K562 (cell line): ENCODE measurements at regions of chr3 and their contacts with region 1.

Region 1: DNA sequence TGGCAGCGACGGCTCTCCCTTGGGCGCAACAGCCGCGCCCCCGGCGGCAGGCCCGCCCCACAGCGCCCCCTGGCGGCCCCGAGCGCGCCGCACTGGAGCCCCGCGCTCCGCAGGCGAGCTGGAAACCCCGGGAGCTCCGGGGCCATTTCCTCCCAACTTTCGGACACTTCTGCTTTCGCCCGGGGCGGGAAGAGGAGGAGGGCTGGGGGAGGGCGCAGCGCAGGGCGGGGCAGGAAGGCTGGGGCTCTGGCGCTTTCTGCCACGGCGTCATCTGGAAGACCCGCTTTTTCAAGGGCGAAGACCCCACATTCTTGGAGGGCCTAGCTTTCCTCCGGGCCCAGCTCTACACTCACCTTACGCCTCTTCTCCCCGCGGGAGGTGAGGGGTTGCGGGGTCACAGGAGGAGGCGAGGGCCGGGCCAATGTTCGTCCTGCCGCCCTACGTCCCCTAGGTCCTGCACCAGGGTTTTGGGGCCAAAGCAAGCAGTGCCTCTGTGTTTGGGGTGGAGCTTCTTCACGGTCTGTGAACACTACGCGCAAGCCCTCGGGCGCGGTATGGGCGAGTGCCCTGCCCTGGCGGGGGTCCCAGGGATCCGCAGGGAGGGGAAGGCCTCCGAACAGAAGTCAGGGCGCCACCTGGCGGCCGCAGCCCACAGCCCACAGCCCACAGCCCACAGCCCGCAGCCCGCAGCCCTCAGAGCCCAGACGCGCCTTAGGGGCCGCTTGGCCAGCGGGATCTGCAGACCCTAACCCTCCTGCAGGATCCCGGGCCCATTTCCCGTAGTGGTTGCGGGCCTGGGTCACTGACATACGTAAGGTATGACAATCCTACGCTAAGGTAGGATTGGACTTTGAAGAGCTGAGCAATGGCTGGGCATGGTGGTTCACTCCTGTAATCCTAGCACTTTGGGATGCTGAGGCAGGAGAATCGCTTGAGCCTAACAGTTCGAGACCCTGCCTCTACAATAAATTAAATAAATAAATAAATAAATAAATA is 31.1 kb downstream of the FOXL2 start:
- DNase-seq: peak; percentile 90 to 93 (median 92)
- ATAC-seq: peak; percentile 92
- H3K4me3 ChIP-seq: peak overlapping the region; percentile 79
- H3K27ac ChIP-seq: peak overlapping the region; percentile 98
- H3K4me1 ChIP-seq: peaks cover 29 to 36% of the 10 kb centered on the region in 2 experiments
- H3K27me3 ChIP-seq: no peaks in the 10 kb centered on the region
- CTCF ChIP-seq: peak; percentile 72 to 94 (median 78)
- EP300 ChIP-seq: no peak
- POLR2A ChIP-seq: peak; percentile 72
- RAD21 ChIP-seq: peak; percentile 91 to 94

Region 2: GRCh38 chr3:138186803-138187295 is 729.0 kb before region 1 on chr3:
- CTCF ChIA-PET with region 1: no interaction called
- POLR2A ChIA-PET with region 1: no interaction called
- in situ Hi-C with region 1: no loop called
- intact Hi-C with region 1: loop called (anchors 10 kb)
- DNase-seq: peak; percentile 88 to 96 (median 90)
- ATAC-seq: peak; percentile 88
- H3K4me3 ChIP-seq: peak overlapping the region; percentile 77
- H3K27ac ChIP-seq: peak overlapping the region; percentile 97
- H3K4me1 ChIP-seq: peaks cover 0 to 14% of the 10 kb centered on the region in 2 experiments; a peak in 2 of 5 replicates
- H3K27me3 ChIP-seq: no peaks in the 10 kb centered on the region
- CTCF ChIP-seq: no peak
- EP300 ChIP-seq: no peak
- POLR2A ChIP-seq: no peak
- RAD21 ChIP-seq: no peak

Region 3: GRCh38 chr3:138694287-138695007 is 221.4 kb before region 1 on chr3:
- CTCF ChIA-PET with region 1: interaction called, 19 read pairs
- POLR2A ChIA-PET with region 1: interaction called, 4 read pairs
- in situ Hi-C with region 1: loop called (anchors 5 kb)
- intact Hi-C with region 1: loop called (anchors 1 kb)
- DNase-seq: peak in 3 of 4 experiments; percentile 21 to 76 (median 53)
- ATAC-seq: peak; percentile 79
- H3K4me3 ChIP-seq: no peak overlapping the region
- H3K27ac ChIP-seq: peak overlapping the region; percentile 62; the same call in 2 of the 3 replicates
- H3K4me1 ChIP-seq: peaks cover 0 to 16% of the 10 kb centered on the region in 2 experiments; a peak in 4 of 5 replicates
- H3K27me3 ChIP-seq: no peaks in the 10 kb centered on the region
- CTCF ChIP-seq: no peak
- EP300 ChIP-seq: peak; percentile 31; the same call in 1 of the 2 replicates
- POLR2A ChIP-seq: no peak
- RAD21 ChIP-seq: no peak

Region 4: DNA sequence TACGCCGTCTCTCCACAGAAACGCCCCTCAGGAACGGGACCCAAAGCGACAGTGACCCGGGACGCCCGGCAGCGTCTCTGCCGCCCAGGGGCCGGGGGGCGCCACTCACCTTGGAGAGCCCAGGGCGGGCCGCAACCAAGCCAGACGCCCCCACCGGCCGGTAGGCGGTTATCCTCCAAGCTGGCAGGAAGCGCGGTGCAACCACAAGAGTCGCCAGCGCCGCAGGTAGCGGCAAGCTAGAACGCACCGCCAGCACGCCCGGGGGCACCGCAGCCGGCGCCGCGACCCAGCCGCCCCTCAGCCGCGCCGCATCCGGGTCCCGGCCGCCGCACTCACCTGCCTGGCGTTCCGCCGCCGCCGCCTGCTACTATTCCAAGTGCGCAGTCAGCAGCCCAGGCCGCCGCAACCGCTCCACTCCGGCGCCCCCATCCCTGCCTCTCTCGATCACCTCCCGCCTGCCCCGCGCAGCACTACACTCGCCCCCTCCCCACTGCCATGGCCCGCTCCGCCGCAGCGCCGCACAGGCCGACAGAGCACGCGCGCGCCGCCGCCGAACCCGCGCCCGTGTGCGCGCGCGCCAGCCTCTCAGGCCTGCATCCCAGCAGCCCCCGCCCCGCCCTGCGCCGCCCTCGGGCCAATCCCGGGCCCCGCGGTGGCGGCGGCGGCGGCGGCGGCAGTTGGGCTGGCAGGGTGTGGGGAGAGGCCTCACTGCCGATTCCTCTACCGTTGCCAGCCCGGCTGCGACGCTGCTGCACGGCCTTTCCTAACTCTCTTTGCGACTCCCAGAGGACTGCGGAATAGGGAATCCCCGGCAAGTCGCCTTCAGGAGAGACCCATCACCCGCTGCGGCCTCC is 81.2 kb before region 1 on chr3 and contains the start of gene PIK3CB:
- CTCF ChIA-PET with region 1: interaction called, 21 read pairs
- POLR2A ChIA-PET with region 1: interaction called, 6 read pairs
- in situ Hi-C with region 1: loop called (anchors 5 kb)
- intact Hi-C with region 1: loop called (anchors 1 kb)
- DNase-seq: peak; percentile 91 to 94 (median 92)
- ATAC-seq: peak; percentile 88
- H3K4me3 ChIP-seq: peak within 1 kb of the TSS; percentile 99
- H3K27ac ChIP-seq: peak within 1 kb of the TSS; percentile 91
- H3K4me1 ChIP-seq: peaks cover 8 to 9% of the 10 kb centered on the region in 2 experiments; a peak in 4 of 5 replicates
- H3K27me3 ChIP-seq: no peaks in the 10 kb centered on the region
- CTCF ChIP-seq: peak; percentile 59 to 97 (median 75)
- EP300 ChIP-seq: peak; percentile 2; the same call in 1 of the 2 replicates
- POLR2A ChIP-seq: peak; percentile 94
- RAD21 ChIP-seq: peak; percentile 61 to 70
- polyA plus RNA-seq, gene PIK3CB: 15.3 to 19.6 TPM

Region 5: DNA sequence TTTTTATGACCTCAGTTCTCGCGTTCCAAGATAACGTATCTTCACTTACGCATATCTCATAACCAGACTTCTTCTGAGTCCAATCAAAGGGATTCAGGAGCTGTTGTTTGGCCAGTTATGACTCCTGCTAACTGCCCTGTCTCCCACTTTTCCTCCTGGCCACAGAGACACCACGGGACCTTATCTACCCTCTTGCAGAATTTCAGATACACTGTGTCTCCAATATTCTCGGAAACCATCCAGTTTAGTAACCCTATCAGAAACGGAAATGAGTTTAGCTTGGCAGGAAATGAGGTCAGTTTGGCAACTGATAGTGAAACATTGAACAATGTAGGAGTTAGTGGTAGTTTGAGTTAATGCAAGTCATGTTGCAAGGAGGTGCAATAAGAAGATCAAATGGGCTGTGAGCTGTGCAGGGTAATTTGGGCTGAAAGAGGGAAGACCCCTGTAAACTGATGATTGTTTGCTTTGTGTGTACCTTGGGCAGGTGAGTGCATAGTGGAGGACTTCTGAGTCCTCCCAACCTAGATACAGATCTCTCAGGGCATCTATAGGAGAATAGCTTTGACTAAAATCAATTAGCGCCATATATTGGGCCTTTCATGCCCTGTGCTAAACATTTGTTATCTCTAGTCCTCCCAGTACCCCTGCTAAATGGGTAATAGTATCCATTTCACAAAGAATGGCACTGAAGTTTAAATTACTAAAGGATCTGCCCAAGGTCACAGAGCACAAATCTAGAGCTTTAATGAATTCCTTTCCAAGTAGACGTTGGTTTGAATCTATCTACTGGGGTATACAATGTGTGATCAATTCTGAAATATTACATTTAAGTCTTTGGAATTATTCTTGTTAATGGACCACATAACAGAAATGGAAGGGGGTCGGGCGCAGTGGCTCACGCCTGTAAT is 39.8 kb before region 1 on chr3:
- CTCF ChIA-PET with region 1: no interaction called
- POLR2A ChIA-PET with region 1: interaction called, 4 read pairs
- in situ Hi-C with region 1: no loop called
- intact Hi-C with region 1: loop called (anchors 1 kb)
- DNase-seq: peak; percentile 91 to 98 (median 93)
- ATAC-seq: peak; percentile 94
- H3K4me3 ChIP-seq: peak overlapping the region; percentile 10
- H3K27ac ChIP-seq: peak overlapping the region; percentile 98
- H3K4me1 ChIP-seq: peaks cover 5 to 29% of the 10 kb centered on the region in 2 experiments; a peak in 3 of 5 replicates
- H3K27me3 ChIP-seq: no peaks in the 10 kb centered on the region
- CTCF ChIP-seq: no peak
- EP300 ChIP-seq: peak; percentile 99
- POLR2A ChIP-seq: peak; percentile 76
- RAD21 ChIP-seq: peak; percentile 33 to 40; a peak in 3 of 4 replicates

Region 6: GRCh38 chr3:138898301-138898700 is 17.5 kb before region 1 on chr3:
- CTCF ChIA-PET with region 1: no interaction called
- POLR2A ChIA-PET with region 1: interaction called, 11 read pairs
- in situ Hi-C with region 1: no loop called
- intact Hi-C with region 1: no loop called
- DNase-seq: peak in 1 of 4 experiments; percentile 33
- ATAC-seq: peak; percentile 43
- H3K4me3 ChIP-seq: no peak overlapping the region
- H3K27ac ChIP-seq: peak overlapping the region; percentile 37; the same call in 2 of the 3 replicates
- H3K4me1 ChIP-seq: peaks cover 10 to 16% of the 10 kb centered on the region in 2 experiments; a peak in 3 of 5 replicates
- H3K27me3 ChIP-seq: no peaks in the 10 kb centered on the region
- CTCF ChIP-seq: no peak
- EP300 ChIP-seq: no peak
- POLR2A ChIP-seq: no peak
- RAD21 ChIP-seq: no peak

Region 7: GRCh38 chr3:139953131-139953910 is 1037.5 kb after region 1 on chr3:
- CTCF ChIA-PET with region 1: no interaction called
- POLR2A ChIA-PET with region 1: no interaction called
- in situ Hi-C with region 1: no loop called
- intact Hi-C with region 1: no loop called
- DNase-seq: no peak
- ATAC-seq: no peak
- H3K4me3 ChIP-seq: no peak overlapping the region
- H3K27ac ChIP-seq: no peak overlapping the region
- H3K4me1 ChIP-seq: no peaks in the 10 kb centered on the region
- H3K27me3 ChIP-seq: no peaks in the 10 kb centered on the region
- CTCF ChIP-seq: no peak
- EP300 ChIP-seq: no peak
- POLR2A ChIP-seq: no peak
- RAD21 ChIP-seq: no peak